ACHN (cell line): ENCODE measurements at regions of chr20 and their contacts with region 1.

Region 1: DNA sequence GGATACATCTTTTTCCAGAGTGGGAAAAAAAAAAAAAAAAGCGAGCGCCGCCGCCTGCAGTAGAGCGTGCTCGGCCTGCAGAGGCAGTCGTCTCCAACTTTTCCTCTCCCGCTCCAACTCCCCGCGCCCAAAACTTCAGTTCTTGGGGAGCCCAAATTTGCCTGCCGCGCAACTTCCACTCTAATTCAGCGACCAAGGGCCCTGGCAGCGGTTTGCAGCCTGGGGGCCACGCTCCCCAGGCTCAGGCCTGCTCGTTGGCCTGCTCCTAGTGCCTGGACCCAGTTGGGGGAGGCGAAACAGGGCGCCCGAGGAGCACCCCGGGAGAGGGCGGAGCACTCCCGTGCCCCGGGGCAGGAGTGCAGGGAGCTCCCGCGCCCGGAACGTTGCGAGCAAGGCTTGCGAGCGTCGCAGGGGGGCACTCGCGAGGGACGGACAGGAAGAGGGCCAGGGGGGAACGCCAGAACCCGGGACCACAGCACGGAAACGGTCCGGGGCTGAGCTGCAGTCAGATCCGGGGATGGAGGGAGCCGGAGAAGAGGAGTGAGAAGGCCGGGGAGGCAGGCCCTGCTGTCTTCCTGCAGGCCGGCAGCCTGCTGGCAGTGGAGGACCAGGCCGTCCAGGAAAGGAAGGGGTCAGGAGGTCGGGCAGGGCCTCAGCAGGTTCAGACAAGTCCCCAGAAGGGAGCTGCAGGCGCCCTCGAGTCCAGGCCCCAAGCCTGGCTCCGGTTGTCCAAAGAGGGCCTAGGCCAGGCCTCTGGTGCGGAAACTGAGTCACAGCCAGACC is at the start of gene STX16:
- DNase-seq: peak; percentile 92

Region 2: GRCh38 chr20:58236612-58237330 is 414.2 kb before region 1 on chr20:
- in situ Hi-C with region 1: loop called (anchors 25 kb)
- DNase-seq: peak; percentile 54